ENCODE measurements at regions of chr6 and their contacts with region 1.

Region 1: DNA sequence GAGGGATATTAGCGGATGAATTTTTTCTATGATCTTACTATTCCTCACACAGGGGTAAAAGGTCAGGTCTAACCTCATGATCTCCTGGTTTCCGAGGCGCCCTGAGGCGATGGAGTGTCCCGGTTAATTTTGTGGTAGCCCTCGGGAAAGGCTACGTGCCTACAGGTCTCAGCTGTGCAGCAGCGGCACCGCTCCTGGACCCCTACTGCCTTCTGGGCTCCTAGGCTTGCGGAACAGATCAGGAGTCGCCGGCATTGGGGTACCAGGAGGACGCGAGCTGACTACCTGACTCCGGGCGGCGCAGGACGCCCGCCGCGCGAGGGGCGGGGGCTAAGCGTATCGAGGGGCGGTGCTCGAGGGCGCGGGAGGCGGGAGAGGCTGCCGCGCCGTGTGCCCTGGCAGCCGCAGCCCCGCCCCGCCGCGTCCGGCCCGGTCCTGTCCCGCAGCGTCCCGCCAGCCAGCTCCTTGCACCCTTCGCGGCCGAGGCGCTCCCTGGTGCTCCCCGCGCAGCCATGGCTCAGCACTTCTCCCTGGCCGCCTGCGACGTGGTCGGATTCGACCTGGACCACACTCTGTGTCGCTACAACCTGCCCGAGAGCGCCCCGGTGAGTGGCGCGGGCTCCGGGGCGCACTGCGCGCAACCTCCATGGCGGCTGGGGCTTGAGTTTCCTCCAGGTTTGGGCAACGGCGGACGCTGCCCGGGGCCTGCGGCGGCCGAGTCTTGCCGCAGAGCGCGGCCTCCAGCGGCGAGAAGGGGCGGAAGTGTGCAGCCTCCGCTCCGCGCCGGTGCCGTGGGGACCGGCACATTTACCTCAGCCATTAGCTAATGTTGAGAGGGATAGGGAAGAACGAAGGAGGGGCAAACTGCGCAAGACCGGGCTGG is at the start of gene NT5DC1:
- DNase-seq: no peak
- H3K4me3 ChIP-seq: peak within 1 kb of the TSS; percentile 83
- H3K27me3 ChIP-seq: no peaks in the 10 kb centered on the region
- CTCF ChIP-seq: peak; percentile 26; the same call in 1 of the 2 replicates
- polyA plus RNA-seq, gene NT5DC1: 12.3 and 22.1 TPM in 2 replicates

Region 2: DNA sequence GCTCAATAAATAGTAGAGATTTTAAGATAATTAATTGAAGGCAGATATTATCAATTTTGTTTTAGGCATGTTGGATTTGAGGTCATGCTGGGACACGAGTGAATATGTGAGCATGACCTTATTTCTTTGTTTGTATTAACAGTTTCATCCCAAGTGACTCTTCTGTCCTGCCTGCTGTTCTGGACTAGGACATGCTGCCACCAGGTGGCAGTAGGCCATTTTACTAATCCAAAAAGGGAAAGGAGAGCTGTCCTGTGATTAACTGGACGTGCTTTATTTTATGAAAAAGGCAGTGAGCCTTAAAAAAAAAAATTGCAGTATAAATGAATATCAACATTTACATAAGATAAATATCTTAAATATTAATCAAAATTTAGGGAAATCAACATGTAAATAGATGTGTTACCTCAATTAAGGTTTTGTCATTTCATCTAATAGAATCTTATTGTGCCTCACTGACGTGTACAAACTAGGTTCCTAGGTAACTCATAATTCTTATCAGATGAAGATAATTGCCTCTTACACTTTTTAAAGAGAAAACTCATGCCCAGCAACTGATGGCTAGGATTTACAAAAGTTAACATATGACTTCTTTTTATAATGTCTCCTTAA is 89.8 kb before region 1 on chr6:
- CTCF ChIA-PET with region 1: interaction called, 74 read pairs
- POLR2A ChIA-PET with region 1: no interaction called
- DNase-seq: no peak
- H3K4me3 ChIP-seq: no peak overlapping the region
- H3K27me3 ChIP-seq: no peaks in the 10 kb centered on the region
- CTCF ChIP-seq: peak; percentile 86

Region 3: GRCh38 chr6:116016846-116017545 is 83.7 kb before region 1 on chr6:
- CTCF ChIA-PET with region 1: interaction called, 74 read pairs
- POLR2A ChIA-PET with region 1: no interaction called
- DNase-seq: no peak
- H3K4me3 ChIP-seq: no peak overlapping the region
- H3K27me3 ChIP-seq: no peaks in the 10 kb centered on the region
- CTCF ChIP-seq: no peak

Region 4: DNA sequence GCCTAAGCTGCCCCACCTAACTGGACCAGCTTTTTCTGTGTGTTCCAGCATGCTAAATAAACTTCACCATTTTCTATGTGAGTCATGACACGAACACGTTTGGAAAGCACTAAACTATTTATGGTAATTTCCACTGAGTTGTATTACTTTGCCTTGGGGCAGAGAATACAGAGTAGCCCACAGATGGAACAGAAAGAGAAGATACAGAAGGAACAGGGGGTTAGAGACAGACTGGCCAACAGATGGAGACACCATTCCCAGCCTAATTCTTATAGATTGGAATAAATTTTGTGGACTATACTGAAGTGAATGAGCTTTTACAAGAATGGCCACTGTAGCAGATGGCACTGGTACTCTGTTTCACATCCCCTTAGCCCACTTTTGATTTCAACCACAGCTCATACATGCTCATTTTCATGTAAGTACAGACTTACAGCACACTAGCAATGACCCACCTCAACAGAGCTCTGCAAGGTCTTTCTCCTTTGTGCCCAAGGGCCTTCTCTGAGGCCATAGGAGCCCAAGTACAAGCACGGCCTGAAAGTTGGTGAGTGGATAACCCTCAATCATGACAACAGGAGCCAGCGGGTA is 13.1 kb before region 1 on chr6:
- CTCF ChIA-PET with region 1: interaction called, 25 read pairs
- POLR2A ChIA-PET with region 1: interaction called, 3 read pairs
- DNase-seq: peak; percentile 73
- H3K4me3 ChIP-seq: no peak overlapping the region
- H3K27me3 ChIP-seq: no peaks in the 10 kb centered on the region
- CTCF ChIP-seq: peak; percentile 46

Region 5: GRCh38 chr6:116111552-116112528 is 11.2 kb after region 1 on chr6:
- CTCF ChIA-PET with region 1: interaction called, 10 read pairs
- POLR2A ChIA-PET with region 1: interaction called, 3 read pairs
- DNase-seq: no peak
- H3K4me3 ChIP-seq: no peak overlapping the region
- H3K27me3 ChIP-seq: no peaks in the 10 kb centered on the region
- CTCF ChIP-seq: peak; percentile 72